GM10248 (cell line): ENCODE measurements at regions of chr15 and their contacts with region 1.

Region 1: DNA sequence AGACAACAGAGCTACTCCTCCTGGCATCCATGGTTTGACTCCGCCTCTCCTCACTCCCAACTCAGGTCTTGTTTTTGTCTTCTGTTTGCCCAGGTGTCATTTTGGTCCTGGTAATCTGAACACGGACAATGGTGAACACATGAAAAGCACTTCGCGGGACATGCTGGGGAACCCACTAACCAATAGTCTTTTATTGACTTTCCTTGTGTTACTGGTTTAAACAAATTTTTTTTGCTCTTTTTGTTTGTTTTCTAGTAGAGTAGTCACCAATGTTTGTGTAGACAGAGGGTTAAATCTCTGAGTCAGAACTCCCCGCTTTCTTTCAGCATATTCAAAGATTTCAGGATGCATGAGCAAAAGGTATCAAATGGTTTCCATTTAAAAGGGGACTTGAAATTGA is 38.3 kb downstream of the LARP6 start:
- DNase-seq: no peak
- CTCF ChIP-seq: no peak

Region 2: GRCh38 chr15:69475769-69476358 is 1339.8 kb before region 1 on chr15:
- CTCF ChIA-PET with region 1: interaction called, 21 read pairs
- POLR2A ChIA-PET with region 1: no interaction called
- DNase-seq: peak; percentile 70
- CTCF ChIP-seq: peak; percentile 95

Region 3: DNA sequence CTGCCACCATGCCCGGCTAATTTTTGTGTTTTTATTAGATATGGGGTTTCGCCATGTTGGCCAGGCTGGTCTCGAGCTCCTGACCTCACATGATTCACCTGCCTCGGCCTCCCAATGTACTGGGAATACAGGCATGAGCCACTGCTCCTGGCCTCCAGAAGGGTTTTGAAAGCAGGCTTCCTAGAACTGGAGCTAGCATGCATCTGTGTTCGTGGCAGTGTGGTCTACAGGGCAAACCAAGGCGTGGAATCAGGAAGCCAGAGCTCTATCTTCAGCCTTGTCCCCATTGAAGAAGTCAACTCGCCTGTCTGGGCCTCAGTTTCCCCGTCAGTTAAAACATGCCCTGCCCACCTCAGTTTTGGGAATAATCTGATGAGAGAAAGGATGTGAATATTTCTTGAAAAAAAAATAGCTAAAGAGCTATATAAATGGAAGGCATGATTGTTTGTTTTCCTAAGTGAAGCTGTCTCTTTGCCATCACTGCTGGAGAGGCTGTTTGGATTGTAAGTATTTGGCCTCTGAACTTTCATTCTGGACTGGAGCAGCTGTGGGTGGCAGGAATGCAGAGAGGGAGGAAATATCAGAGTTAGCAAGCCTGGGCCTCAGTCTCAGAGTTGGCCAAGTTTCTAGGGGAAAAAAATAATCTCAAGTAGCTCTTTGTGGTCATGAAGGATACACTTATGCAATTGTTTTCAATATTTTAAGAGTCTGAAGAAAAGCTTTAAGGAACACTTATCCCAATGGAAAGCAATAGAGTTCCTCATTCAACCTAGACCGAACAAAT is 15.8 kb before region 1 on chr15:
- CTCF ChIA-PET with region 1: interaction called, 15 read pairs
- POLR2A ChIA-PET with region 1: no interaction called
- DNase-seq: no peak
- CTCF ChIP-seq: no peak

Region 4: DNA sequence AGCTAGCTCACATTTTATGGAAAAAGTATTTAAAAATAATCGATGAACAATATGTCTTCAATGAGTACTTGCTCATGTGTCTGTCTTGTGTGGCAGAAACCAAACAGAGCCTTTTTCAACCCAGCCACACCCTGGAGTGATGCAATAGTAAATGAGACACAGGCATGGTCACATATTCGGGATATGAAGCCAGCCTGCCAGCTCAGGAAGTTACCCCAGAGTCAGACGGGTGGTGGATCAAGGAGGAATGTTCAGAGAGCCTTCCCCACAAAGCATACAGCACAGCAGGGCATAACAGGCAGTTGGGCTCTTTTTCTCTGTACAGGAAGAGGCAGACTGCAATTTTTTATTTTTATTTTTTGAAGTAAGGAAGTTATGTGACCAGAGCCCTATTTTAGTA is 11.0 kb after region 1 on chr15:
- CTCF ChIA-PET with region 1: interaction called, 11 read pairs
- POLR2A ChIA-PET with region 1: no interaction called
- DNase-seq: no peak
- CTCF ChIP-seq: no peak